ENCODE measurements at regions of chrX and their contacts with region 1.

Region 1: DNA sequence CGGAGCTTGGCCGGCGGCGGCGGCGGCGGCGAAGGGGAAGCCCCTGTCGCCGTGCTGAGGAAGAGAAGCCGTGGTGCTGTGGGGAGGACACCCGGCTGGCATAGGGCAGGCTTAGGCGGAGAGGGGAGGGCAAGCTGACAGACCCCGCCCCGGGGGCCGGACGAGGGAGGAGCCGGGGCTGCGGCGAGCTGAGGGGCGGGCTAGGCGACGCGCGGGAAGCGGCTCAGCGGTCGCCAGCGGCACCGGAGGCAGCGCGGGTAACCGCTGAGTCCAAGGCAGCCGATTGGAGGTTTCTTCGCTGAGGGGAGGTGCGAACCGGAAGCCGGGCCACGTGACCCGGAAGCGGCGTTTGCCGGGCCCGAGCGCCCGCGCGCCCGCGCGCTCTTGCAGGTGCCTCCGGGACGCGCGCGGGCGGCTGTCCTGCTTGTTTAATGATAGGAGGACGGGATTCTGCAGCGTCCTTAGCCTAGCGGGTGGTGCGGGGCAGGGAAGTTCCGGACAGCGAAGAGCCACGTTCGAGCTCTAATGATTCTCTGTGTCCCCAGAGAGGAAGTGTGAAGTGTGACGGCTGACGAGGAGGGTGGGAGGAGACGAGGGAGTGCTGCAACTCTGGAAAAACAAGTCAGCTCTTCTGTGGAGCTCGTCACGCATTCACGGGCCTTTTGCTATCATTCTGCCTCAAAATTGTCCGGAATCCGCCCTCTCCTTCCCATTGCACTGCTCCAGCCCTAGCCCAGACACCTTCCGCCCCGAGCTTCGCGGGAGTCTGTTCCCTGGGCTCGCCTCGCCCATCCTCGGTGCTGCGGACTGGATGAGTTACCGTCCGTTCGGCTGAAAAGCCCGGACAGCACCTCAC is at the start of gene AP1S2:
- DNase-seq: peak; percentile 83 to 94 (median 88)
- ATAC-seq: peak; percentile 97
- H3K4me3 ChIP-seq: peak within 1 kb of the TSS; percentile 70
- H3K27ac ChIP-seq: peak within 1 kb of the TSS; percentile 85
- H3K4me1 ChIP-seq: peaks cover 0 to 8% of the 10 kb centered on the region in 2 experiments; a peak in 3 of 5 replicates
- H3K27me3 ChIP-seq: no peaks in the 10 kb centered on the region
- CTCF ChIP-seq: no peak
- EP300 ChIP-seq: peak; percentile 14; the same call in 1 of the 2 replicates
- POLR2A ChIP-seq: peak; percentile 81
- RAD21 ChIP-seq: no peak
- polyA plus RNA-seq, gene AP1S2: 11.1 to 13.7 TPM

Region 2: DNA sequence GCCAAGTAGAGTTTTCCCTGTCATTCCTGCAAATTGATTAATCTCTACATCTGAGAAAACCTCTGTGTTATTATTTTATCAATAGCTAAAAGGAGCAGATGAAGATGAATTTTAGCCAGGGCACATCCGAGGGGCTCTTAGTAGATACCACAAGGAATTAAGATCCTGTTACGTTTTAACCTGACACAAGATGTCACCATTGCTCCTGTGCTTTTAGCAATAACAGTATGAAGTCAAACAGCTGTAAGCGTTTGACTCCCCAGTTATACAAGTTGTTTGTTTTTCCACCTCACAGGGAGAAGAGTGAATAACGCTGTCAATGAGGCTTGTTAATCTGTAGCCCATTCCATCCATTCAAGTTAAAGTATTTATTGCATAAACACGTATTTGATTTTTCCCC is 75.6 kb after region 1 on chrX:
- CTCF ChIA-PET with region 1: no interaction called
- POLR2A ChIA-PET with region 1: no interaction called
- in situ Hi-C with region 1: no loop called
- intact Hi-C with region 1: loop called (anchors 5 kb)
- DNase-seq: peak in 2 of 4 experiments; percentile 12 to 17
- ATAC-seq: peak; percentile 52; the same call in 1 of the 3 replicates
- H3K4me3 ChIP-seq: no peak overlapping the region
- H3K27ac ChIP-seq: no peak overlapping the region
- H3K4me1 ChIP-seq: no peaks in the 10 kb centered on the region
- H3K27me3 ChIP-seq: no peaks in the 10 kb centered on the region
- CTCF ChIP-seq: peak in 2 of 3 experiments; percentile 18 to 53; a peak in 2 of 6 replicates
- EP300 ChIP-seq: no peak
- POLR2A ChIP-seq: no peak
- RAD21 ChIP-seq: peak; percentile 80 to 88

Region 3: DNA sequence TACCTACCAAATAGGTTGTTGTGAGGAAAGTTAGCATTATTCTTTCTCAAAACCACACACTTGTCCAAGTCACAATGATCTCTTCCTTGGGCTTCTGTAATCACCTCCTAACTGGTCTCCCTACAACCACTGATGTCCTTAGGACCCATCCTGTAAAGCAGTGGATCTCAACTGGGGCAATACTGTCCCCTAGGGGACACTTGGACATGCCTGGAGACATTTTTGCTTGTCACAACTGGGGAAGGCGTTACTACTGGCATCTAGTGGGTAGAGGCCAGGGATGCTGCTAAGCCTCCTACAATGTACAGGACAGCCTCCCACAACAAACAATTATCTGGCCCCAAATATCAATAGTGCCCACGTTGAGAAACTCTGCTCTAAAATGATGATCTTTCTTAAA is 118.4 kb after region 1 on chrX:
- CTCF ChIA-PET with region 1: no interaction called
- POLR2A ChIA-PET with region 1: no interaction called
- in situ Hi-C with region 1: no loop called
- intact Hi-C with region 1: loop called (anchors 2 kb)
- DNase-seq: peak; percentile 4 to 61 (median 28)
- ATAC-seq: peak; percentile 94
- H3K4me3 ChIP-seq: no peak overlapping the region
- H3K27ac ChIP-seq: no peak overlapping the region
- H3K4me1 ChIP-seq: peaks cover 0 to 19% of the 10 kb centered on the region in 2 experiments; a peak in 2 of 5 replicates
- H3K27me3 ChIP-seq: no peaks in the 10 kb centered on the region
- CTCF ChIP-seq: peak; percentile 69 to 94 (median 92)
- EP300 ChIP-seq: no peak
- POLR2A ChIP-seq: no peak
- RAD21 ChIP-seq: peak; percentile 93